ENCODE measurements at regions of chr10 and their contacts with region 1.

Region 1: DNA sequence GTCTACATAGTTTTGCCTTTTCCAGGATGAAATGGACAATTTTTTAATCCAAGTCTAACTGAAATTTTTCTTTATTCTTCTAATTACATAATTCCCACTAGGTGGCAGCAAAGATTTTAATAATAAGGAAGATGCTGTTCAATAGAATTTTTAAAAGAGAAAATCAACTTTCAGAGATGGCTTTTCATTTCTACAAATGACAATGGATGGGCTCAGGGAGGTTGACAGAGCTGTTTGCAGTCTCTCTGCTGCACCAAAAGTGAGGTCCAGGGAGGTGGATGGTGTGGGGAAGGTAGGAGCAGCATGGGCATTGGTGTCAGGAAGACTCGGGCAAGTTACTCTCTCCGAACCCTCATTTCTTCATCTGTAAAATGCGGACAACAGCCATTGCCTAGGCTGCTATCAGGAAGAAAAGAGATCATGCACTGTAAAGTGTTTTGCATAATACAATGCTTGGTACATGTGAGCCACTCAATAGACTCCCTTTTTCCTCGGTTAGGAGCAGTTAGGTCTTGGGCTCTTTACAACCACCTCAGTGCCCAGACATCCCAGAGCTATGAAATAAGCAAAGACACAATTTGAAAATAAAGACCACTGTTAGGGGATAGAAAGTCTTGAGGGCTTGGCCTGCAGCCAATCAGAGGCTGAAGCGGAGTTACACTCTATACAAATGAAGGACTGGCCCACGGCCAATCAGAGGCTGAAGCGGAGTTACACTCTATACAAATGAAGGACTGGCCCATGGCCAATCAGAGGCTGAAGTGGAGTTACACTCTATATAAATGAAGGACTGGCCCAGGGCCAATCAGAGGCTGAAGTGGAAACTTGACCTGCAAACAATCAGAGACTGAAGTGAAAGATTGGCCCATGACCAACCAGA is 107.1 kb downstream of the ABLIM1 start:
- DNase-seq: peak in 1 of 2 donors; percentile 35
- ATAC-seq: peak in 1 of 2 donors; percentile 10
- H3K4me3 ChIP-seq: peak overlapping the region in 2 of 4 donors; percentile 11 to 27
- H3K27ac ChIP-seq: peak overlapping the region; percentile 62 to 81 (median 78)
- H3K4me1 ChIP-seq: peaks cover 18 to 50% of the 10 kb centered on the region in 2 donors
- H3K27me3 ChIP-seq: no peaks in the 10 kb centered on the region
- CTCF ChIP-seq: peak; percentile 37 to 57 (median 56)
- POLR2A ChIP-seq: no peak

Region 2: DNA sequence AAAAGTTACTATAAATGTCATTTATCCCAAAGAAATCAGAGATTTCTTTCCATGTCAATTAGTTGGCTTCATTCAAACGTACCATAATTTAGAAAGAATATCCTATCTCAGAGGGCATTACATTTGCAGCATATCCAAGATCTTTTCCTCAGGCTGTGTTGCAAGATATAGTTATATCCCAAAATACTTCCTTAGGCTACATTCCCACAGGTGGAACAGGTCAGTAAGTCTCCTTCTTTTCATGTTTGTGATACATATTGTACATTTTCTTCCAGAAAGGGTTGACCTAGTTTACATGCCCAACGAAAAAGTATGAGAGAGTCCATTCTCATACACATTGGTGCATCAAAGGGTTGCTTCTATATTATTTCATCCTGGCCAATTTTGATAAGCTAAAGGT is 338.8 kb before region 1 on chr10:
- in situ Hi-C with region 1: no loop called
- intact Hi-C with region 1: no loop called
- DNase-seq: no peak
- ATAC-seq: no peak
- H3K4me3 ChIP-seq: no peak overlapping the region
- H3K27ac ChIP-seq: no peak overlapping the region
- H3K4me1 ChIP-seq: no peaks in the 10 kb centered on the region
- H3K27me3 ChIP-seq: no peaks in the 10 kb centered on the region
- CTCF ChIP-seq: no peak
- POLR2A ChIP-seq: no peak

Region 3: GRCh38 chr10:114304017-114304570 is 246.9 kb before region 1 on chr10:
- in situ Hi-C with region 1: loop called in 1 of 4 experiments (anchors 25 kb)
- intact Hi-C with region 1: loop called (anchors 1 kb)
- DNase-seq: peak; percentile 41 to 68
- ATAC-seq: peak; percentile 87 to 94
- H3K4me3 ChIP-seq: peak overlapping the region; percentile 14 to 47 (median 40)
- H3K27ac ChIP-seq: peak overlapping the region in 2 of 4 donors; percentile 2 to 40
- H3K4me1 ChIP-seq: peaks cover 8 to 13% of the 10 kb centered on the region in 2 donors
- H3K27me3 ChIP-seq: no peaks in the 10 kb centered on the region
- CTCF ChIP-seq: peak; percentile 59 to 77 (median 72)
- POLR2A ChIP-seq: no peak

Region 4: DNA sequence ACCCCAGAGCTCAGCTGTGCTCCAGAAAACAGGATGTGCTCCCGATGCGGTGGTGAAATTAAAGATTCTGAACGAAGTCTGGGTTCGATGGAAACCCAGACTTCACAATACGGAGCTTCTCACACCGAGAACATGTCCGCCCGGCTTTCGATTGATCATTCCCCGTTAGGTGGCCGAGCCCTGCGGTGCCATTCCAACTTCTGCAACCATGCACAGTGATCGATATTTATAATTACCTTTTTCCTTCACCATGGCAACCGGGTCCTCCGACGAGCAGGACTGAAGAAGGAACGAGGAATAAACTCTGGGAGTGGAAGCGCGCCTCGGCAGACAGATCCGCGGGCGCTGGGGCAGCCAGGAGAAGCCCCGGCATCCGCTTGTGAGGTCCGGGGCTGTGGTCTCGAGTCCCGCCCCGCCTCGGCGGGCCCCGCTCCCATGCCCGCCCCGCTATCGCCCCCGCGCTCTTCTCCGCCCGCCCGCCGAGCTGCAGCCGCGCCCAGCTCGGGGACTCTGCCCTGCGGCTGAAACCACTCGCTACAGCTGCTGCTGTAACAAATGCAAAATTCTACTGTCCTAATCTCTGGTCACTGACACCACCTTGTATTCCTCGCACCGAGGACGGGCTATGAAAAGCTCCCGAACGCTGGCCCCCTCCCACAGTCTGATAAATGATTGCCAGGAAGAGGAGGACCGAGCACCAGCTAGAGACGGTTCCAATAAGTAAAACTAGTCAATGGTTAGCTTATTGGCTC is 80.8 kb after region 1 on chr10:
- in situ Hi-C with region 1: no loop called
- intact Hi-C with region 1: loop called (anchors 1 kb)
- DNase-seq: peak in 1 of 2 donors; percentile 44
- ATAC-seq: peak; percentile 18 to 48
- H3K4me3 ChIP-seq: peak overlapping the region; percentile 56 to 60 (median 58)
- H3K27ac ChIP-seq: peak overlapping the region; percentile 67 to 81 (median 79)
- H3K4me1 ChIP-seq: peaks cover 37 to 48% of the 10 kb centered on the region in 2 donors
- H3K27me3 ChIP-seq: peaks cover 13 to 33% (median 32%) of the 10 kb centered on the region in 3 donors
- CTCF ChIP-seq: no peak
- POLR2A ChIP-seq: peak; percentile 35 to 41

Region 5: DNA sequence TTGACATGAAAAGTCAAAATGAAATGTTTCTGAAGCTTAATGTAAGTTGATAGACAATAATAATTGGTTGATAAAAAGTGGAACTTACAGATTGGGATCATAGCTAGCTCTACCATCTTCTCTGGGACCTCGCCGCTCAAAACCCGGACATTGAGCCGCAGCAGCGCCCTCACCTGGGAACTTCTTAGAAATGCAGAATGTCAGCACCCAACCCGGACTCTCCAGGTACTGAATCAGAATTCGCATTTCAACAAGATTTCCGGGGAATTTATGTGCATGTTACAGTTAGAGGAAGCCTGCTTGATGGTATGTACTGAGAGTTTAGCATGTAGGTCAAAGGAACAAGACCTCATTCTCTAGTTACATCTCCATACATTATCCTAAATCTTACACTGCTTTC is 143.8 kb after region 1 on chr10:
- in situ Hi-C with region 1: loop called in 1 of 4 experiments (anchors 10 kb)
- intact Hi-C with region 1: no loop called
- DNase-seq: no peak
- ATAC-seq: no peak
- H3K4me3 ChIP-seq: no peak overlapping the region
- H3K27ac ChIP-seq: peak overlapping the region in 1 of 4 donors; percentile 12
- H3K4me1 ChIP-seq: peaks cover 14 to 32% of the 10 kb centered on the region in 2 donors
- H3K27me3 ChIP-seq: no peaks in the 10 kb centered on the region
- CTCF ChIP-seq: peak in 2 of 5 experiments; percentile 13 to 32
- POLR2A ChIP-seq: no peak

Region 6: GRCh38 chr10:114708717-114709335 is 157.8 kb after region 1 on chr10:
- in situ Hi-C with region 1: loop called in 2 of 4 experiments (anchors 5 kb)
- intact Hi-C with region 1: loop called (anchors 2 kb)
- DNase-seq: no peak
- ATAC-seq: no peak
- H3K4me3 ChIP-seq: no peak overlapping the region
- H3K27ac ChIP-seq: peak overlapping the region in 3 of 4 donors; percentile 55 to 66 (median 61)
- H3K4me1 ChIP-seq: peaks cover 0 to 23% of the 10 kb centered on the region in 2 donors
- H3K27me3 ChIP-seq: no peaks in the 10 kb centered on the region
- CTCF ChIP-seq: no peak
- POLR2A ChIP-seq: no peak

Region 7: DNA sequence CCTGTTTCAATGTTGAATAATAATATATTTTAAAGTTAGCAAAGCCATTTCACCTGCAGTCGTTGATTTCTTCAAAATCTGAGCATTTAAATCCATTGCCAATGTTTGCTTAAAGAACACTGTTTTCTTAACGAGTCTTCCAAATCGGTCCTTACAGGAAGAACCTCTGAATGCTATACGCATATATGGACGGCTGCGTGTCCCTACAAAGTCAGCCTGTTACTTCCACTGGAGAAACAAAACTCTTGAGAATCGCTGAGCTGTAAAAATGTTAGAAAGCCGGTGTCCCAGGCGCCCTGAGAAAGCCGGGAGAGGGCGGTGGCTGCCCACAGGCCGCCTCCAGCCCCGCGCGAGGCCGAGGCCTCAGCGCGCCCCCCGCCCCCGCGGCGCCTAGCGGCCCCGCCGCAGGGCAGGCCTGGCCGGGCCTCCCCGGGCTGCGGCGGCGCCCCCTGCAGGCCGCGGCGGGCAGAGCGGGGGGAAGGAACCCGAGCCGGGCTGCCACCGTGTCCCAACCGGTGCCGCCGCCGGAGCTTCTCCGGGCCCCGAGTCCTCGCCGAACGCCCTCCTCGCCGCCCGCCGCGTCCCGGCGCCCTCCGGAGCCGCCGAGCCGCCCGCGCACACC is 270.4 kb after region 1 on chr10 and contains the start of gene FHIP2A:
- in situ Hi-C with region 1: no loop called
- intact Hi-C with region 1: loop called (anchors 10 kb)
- DNase-seq: peak; percentile 40 to 76
- ATAC-seq: peak; percentile 65 to 73
- H3K4me3 ChIP-seq: peak within 1 kb of the TSS; percentile 77 to 89 (median 86)
- H3K27ac ChIP-seq: peak within 1 kb of the TSS; percentile 96 to 98 (median 96)
- H3K4me1 ChIP-seq: peaks cover 23 to 27% of the 10 kb centered on the region in 2 donors
- H3K27me3 ChIP-seq: no peaks in the 10 kb centered on the region
- CTCF ChIP-seq: peak in 4 of 5 experiments; percentile 82 to 91 (median 90)
- POLR2A ChIP-seq: peak; percentile 80 to 82
- total RNA-seq, gene FHIP2A: 22.2 to 35.7 (median 30.1) TPM

Measured in gastrocnemius medialis (tissue), 4 donors.